Activated CD4-positive, alpha-beta T cell treated with anti-CD3 and anti-CD28 coated beads, Interleukin-2, amount 10 ng/mL, durations not matched to agents 24 days and 14 days (primary cell): ENCODE measurements at regions of chr22 and their contacts with region 1.

Region 1: DNA sequence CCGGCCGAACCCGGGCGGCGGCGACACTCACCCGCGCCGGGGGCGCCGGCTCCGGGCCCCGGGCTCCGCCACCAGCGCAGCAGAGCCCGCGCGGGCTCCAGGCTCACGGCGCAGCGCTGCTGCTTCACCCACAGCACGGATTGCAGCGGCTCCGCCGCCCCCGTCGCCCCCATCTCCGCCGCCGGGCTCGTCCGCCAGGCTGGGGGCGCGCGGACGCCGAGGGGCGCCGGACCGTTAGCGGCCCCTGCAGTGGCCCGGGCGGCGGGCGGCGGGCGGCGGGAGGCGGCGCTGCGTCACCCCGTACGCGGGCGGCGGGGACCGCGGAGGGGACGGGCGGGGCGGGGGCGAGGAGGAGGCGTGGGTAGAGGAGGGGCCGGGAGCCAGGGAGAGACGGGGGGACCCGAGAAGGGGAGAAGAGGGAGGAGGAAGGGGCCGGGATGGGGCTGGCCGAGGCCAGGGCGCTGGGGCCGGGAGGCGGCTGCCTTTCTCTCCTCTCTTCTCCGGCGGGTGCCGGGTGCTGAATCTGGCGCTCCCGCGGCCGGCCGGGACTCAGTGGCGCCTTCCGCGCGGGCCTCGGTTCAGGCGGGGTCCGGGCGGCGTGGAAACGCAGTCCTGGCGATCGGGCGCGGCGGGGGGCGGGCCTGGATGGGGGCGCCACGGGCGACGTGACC is at the start of gene CERK:
- DNase-seq: peak; percentile 92
- H3K4me3 Mint-ChIP-seq: peak within 1 kb of the TSS; percentile 99
- H3K27ac Mint-ChIP-seq: peak within 1 kb of the TSS; percentile 97
- H3K4me1 Mint-ChIP-seq: peaks cover 34% of the 10 kb centered on the region
- H3K27me3 Mint-ChIP-seq: no peaks in the 10 kb centered on the region
- total RNA-seq, gene CERK: 62.8 and 63.2 TPM in 2 replicates

Region 2: GRCh38 chr22:46563381-46564083 is 174.6 kb before region 1 on chr22:
- intact Hi-C with region 1: loop called (anchors 5 kb)
- DNase-seq: peak; percentile 94
- H3K4me3 Mint-ChIP-seq: peak overlapping the region; percentile 15
- H3K27ac Mint-ChIP-seq: peak overlapping the region; percentile 73
- H3K4me1 Mint-ChIP-seq: peaks cover 11% of the 10 kb centered on the region
- H3K27me3 Mint-ChIP-seq: peaks cover 2% of the 10 kb centered on the region

Region 3: GRCh38 chr22:46613606-46614021 is 124.5 kb before region 1 on chr22:
- intact Hi-C with region 1: loop called (anchors 5 kb)
- DNase-seq: peak; percentile 66
- H3K4me3 Mint-ChIP-seq: peak overlapping the region; percentile 85
- H3K27ac Mint-ChIP-seq: peak overlapping the region; percentile 93
- H3K4me1 Mint-ChIP-seq: peaks cover 35% of the 10 kb centered on the region
- H3K27me3 Mint-ChIP-seq: no peaks in the 10 kb centered on the region

Region 4: GRCh38 chr22:46762238-46763050 is 24.3 kb after region 1 on chr22 and contains the start of gene TBC1D22A:
- intact Hi-C with region 1: loop called (anchors 1 kb)
- DNase-seq: peak; percentile 99
- H3K4me3 Mint-ChIP-seq: peak within 1 kb of the TSS; percentile 97
- H3K27ac Mint-ChIP-seq: peak within 1 kb of the TSS; percentile 99
- H3K4me1 Mint-ChIP-seq: peaks cover 46% of the 10 kb centered on the region
- H3K27me3 Mint-ChIP-seq: no peaks in the 10 kb centered on the region
- total RNA-seq, gene TBC1D22A: 39.2 and 41.0 TPM in 2 replicates

Region 5: DNA sequence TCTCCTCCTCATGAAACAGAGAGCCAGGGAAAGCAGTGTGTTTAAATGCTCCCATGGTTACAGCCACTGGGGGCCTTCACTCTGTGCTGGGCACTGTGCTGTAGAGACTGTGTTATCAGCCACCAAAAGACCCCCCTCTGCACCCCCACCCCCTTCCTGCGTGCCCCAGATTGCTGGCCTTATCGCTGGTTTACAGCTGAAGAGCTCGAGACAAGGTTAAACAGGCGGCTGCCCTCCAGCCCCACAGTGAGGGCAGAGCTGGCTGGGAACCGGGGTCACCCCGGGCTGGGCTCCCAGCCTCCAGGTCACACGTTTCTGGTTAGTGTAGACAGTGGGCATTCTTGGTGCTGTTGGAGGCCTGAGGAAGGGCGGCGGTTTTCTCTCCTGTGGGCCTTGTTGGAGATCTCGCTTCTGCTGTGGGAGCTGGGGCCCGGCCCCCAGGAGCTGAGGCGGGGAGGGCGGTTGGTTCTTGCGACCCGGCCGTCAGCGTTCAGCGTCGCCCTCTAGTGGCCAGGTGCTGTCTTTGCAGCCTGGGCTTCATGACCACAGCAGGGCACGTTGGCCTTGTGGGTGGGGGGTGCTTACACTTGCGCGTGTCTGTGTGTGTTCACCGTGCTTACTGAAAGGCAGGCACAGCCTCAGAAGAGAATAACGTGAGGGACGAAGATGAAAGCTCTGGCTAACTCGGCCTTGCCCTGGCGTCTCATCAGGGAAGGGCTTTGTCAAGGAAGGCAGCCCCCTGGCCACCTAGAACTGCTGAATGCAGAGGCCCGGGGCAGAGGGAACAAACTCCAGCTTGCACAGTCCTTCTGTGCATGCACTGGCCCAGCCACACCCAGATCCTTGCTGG is 65.1 kb after region 1 on chr22:
- intact Hi-C with region 1: loop called (anchors 1 kb)
- DNase-seq: peak; percentile 90
- H3K4me3 Mint-ChIP-seq: no peak overlapping the region
- H3K27ac Mint-ChIP-seq: no peak overlapping the region
- H3K4me1 Mint-ChIP-seq: peaks cover 32% of the 10 kb centered on the region
- H3K27me3 Mint-ChIP-seq: no peaks in the 10 kb centered on the region

Region 6: DNA sequence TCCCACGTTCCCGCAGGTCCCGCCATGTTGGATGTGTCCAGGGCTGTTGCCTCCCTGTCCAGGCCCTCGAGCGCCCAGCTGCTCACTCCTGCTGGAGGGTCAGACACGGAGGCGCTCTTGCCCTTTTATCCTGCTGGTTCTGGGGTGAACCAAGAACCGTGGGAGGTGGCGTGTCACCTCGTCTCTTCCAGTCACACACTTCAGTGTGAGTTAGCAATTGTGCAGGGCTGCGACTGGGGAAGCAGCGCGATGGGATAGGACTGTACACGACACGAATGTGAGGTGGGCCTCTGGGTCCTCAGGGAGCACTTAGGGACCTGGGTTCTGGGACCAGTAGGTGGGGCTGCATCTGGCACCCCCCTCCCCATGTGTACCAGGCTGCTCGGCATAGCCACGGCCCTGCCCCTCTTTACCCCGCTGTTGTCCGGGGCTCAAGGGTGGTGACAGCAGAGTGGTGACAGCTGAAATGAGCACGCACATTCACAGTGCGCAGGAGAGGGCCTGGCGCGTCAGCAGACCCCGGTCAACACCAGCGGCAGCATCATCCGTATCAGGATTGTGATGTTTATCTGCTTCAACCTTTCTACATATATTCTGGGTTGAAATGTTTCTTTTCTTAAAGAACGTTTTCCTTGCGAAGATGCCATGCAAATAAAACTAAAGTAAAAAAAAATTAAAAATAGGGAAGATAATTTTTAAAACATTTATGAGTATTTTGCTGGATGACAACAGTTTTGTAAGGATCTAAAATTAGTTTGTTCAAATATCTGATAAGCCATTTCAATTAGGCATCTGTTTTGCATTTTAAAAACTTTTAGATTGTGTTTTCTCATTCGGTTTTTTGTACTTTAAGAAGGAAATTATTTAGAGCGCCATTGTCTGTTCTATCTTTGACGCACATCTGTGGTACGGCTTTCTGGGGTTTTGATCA is 235.1 kb after region 1 on chr22:
- intact Hi-C with region 1: no loop called
- DNase-seq: no peak
- H3K4me3 Mint-ChIP-seq: no peak overlapping the region
- H3K27ac Mint-ChIP-seq: no peak overlapping the region
- H3K4me1 Mint-ChIP-seq: peaks cover 16% of the 10 kb centered on the region
- H3K27me3 Mint-ChIP-seq: no peaks in the 10 kb centered on the region

Region 7: DNA sequence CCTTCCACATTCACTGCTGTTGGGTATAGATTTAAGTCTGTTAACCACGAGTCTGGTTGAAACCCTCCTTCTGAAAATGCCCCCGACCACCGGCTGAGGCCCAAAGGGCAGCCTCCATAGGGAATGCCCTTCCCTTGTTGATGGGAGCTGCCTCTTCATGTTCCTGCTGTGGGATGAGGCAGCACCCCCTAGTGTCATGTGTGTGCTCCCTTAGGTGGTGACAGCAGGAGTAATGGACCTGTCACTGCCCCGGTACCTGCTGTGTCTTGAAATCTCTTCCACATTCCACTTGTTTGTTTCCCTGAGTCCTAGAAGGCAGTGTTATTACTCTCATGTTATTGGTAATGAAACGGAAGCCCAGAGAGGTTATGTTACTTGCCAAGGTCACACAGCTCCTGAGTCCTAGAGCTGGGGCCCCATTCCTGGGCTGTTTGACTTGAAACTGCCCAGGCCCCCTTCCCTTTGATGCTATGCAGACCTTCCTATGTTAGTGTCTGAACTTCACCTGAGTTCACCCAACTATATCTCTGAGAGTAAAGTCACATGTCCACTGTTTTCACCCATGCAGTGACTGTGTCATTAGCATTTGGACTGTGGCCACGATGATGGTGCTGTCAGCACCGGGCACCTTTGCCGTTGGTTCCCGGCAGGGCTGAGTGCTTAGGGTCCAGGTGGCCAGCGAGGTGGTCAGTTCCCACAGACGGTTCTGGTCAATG is 258.6 kb after region 1 on chr22:
- intact Hi-C with region 1: no loop called
- DNase-seq: no peak
- H3K4me3 Mint-ChIP-seq: no peak overlapping the region
- H3K27ac Mint-ChIP-seq: no peak overlapping the region
- H3K4me1 Mint-ChIP-seq: peaks cover 18% of the 10 kb centered on the region
- H3K27me3 Mint-ChIP-seq: no peaks in the 10 kb centered on the region